MCF 10A (cell line): ENCODE measurements at regions of chr1 and their contacts with region 1.

Region 1: DNA sequence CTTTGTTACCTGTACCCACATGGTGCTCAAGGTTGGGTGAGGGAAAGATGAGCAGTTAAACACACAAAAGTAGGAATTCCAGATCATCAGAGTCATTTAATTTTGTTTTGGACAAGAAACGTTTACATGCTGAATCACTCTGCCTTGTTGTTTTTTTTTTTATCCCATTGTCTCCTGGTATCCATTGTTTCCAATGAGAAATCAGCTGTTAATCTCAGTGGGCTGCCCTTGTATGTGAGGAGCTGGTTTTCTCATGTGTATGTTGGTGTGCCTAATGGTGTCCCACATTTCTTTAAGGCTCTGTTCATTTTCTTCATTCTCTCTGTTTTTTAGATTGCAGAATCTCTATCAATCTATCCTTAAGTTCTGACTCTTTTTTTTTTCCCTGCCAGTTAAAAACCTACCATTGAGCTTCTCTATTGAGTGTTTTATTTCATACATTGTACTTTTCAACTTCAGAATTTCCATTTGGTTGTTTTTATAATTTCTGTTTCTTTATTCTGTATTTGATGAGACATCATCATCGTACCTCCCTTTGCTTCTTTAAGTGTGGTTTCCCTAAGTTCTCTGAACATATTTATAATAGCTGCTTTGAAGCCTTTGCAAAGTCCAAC is 8.8 kb upstream of the OBSCN start:
- DNase-seq: peak; percentile 33
- H3K4me3 Mint-ChIP-seq: no peak overlapping the region
- H3K27ac Mint-ChIP-seq: no peak overlapping the region
- H3K4me1 Mint-ChIP-seq: no peaks in the 10 kb centered on the region
- H3K27me3 Mint-ChIP-seq: no peaks in the 10 kb centered on the region
- CTCF ChIP-seq: no peak

Region 2: GRCh38 chr1:227489572-227489971 is 709.5 kb before region 1 on chr1:
- CTCF ChIA-PET with region 1: no interaction called
- POLR2A ChIA-PET with region 1: no interaction called
- intact Hi-C with region 1: loop called (anchors 10 kb)
- DNase-seq: no peak
- H3K4me3 Mint-ChIP-seq: no peak overlapping the region
- H3K27ac Mint-ChIP-seq: no peak overlapping the region
- H3K4me1 Mint-ChIP-seq: no peaks in the 10 kb centered on the region
- H3K27me3 Mint-ChIP-seq: peaks cover 3% of the 10 kb centered on the region
- CTCF ChIP-seq: no peak